Panc1 (cell line): ENCODE measurements at regions of chr2 and their contacts with region 1.

Region 1: GRCh38 chr2:231029563-231029962 is 7.8 kb upstream of the C2orf72 start:
- DNase-seq: no peak
- ATAC-seq: no peak
- H3K4me3 ChIP-seq: no peak overlapping the region
- H3K27ac ChIP-seq: no peak overlapping the region
- H3K4me1 ChIP-seq: no peaks in the 10 kb centered on the region
- H3K27me3 ChIP-seq: no peaks in the 10 kb centered on the region
- CTCF ChIP-seq: no peak

Region 2: DNA sequence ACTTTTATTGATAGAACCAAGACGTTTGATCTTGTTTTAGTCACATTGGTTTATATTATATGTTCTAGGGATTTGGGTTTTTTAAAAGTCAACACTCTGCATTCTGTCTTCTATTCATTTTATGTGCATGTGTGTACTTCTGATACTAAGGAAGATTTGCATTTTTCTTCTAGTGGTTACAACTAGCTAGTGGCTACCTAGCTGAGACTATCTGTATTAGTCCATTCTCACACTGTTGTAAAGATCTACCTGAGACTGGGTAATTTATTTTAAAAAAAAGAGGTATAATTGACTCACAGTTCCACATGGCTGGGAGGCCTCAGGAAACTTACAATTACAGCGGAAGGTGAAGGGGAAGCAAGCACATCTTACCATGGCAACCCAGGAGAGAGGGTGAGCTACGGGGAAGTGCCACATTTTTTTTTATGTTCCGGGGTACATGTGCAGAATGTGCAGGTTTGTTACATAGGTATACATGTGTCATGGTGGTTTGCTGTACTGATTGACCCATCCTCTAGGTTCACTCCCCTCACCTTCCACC is 543.7 kb before region 1 on chr2:
- CTCF ChIA-PET with region 1: no interaction called
- POLR2A ChIA-PET with region 1: no interaction called
- in situ Hi-C with region 1: no loop called
- intact Hi-C with region 1: no loop called
- DNase-seq: no peak
- ATAC-seq: no peak
- H3K4me3 ChIP-seq: no peak overlapping the region
- H3K27ac ChIP-seq: no peak overlapping the region
- H3K4me1 ChIP-seq: no peaks in the 10 kb centered on the region
- H3K27me3 ChIP-seq: no peaks in the 10 kb centered on the region
- CTCF ChIP-seq: no peak

Region 3: DNA sequence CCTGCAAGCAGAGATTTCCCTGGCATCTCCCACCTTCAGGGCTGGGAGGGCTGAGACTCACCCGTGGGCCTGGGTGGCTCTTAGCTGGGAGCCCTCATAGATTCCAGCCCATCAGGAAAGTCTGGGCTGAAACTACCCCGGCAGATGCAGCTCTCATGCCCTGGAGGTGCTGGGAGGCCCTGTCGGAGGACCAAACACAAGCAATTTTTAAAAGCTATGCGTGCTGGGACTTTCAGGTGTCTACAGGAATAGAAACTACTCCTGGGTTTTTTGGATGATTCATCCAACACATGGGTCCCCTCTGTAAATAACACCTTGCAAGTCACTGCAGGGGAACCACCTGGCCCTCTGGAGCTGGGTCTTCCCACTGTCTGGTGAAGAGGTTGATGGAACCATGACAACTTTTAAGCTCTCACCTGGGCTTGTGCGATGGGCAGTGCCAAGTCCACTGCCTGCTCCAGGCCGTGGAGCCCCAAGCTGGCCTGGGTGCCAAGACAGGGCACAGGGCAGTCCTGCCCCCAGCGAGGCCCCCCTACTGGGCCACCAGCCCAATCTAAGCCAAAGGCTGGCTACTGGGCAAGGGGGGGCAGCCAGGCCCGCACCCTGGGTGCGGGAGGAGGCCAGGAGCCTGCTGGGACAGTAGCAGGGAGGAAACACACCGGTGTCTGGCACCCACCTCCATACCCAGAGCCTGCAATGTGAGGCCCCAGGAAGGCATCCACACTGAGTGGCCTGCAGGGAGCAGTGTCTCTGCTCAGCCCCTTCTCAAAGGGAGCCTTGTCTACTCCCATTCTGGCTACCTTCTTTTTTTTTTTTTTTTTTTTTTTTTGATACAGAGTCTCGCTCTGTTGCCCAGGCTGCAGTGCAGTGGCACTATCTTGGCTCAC is 103.4 kb before region 1 on chr2:
- CTCF ChIA-PET with region 1: interaction called, 20 read pairs
- POLR2A ChIA-PET with region 1: no interaction called
- in situ Hi-C with region 1: no loop called
- intact Hi-C with region 1: no loop called
- DNase-seq: no peak
- ATAC-seq: peak; percentile 47; the same call in 1 of the 2 replicates
- H3K4me3 ChIP-seq: no peak overlapping the region
- H3K27ac ChIP-seq: no peak overlapping the region
- H3K4me1 ChIP-seq: no peaks in the 10 kb centered on the region
- H3K27me3 ChIP-seq: no peaks in the 10 kb centered on the region
- CTCF ChIP-seq: no peak

Region 4: GRCh38 chr2:231017231-231017598 is 12.3 kb before region 1 on chr2:
- CTCF ChIA-PET with region 1: interaction called, 14 read pairs
- POLR2A ChIA-PET with region 1: no interaction called
- in situ Hi-C with region 1: no loop called
- intact Hi-C with region 1: no loop called
- DNase-seq: no peak
- ATAC-seq: no peak
- H3K4me3 ChIP-seq: no peak overlapping the region
- H3K27ac ChIP-seq: no peak overlapping the region
- H3K4me1 ChIP-seq: no peaks in the 10 kb centered on the region
- H3K27me3 ChIP-seq: no peaks in the 10 kb centered on the region
- CTCF ChIP-seq: no peak